SK-N-SH (cell line): ENCODE measurements at regions of chr19 and their contacts with region 1.

Region 1: GRCh38 chr19:42290523-42291438 is 11.2 kb upstream of the PRR19 start:
- DNase-seq: peak; percentile 88
- H3K4me3 ChIP-seq: no peak overlapping the region
- H3K27ac ChIP-seq: no peak overlapping the region; a peak in 1 of 4 replicates
- H3K4me1 ChIP-seq: peaks cover 6 to 13% of the 10 kb centered on the region in 2 experiments; a peak in 2 of 4 replicates
- H3K27me3 ChIP-seq: no peaks in the 10 kb centered on the region
- CTCF ChIP-seq: peak; percentile 67
- EP300 ChIP-seq: no peak
- RAD21 ChIP-seq: peak; percentile 56

Region 2: DNA sequence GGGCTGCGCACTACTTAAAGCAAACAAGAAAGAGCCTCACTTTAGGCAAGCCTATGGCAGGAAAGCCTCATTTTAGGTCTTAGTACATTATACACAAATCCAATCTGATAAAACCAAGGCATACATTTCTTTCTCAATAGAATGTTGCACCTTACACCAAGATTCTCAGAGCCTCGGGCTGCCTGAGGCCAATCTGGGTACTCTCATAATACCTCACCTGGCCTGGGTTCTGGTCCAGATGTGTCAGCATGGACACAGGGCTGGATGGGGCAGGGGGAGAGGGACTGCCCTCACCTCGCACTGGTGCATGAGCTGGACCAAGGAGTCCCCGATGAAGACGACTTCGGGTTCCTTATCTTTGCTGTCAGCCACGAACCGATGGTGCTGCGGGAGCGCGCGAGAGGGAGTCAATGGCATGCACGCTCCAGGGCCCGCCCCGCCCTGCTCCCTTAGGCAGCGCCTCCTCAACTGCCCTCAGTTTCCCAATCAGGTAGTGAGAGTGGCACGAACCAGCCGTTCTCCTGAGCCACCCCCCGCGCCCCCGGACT is 10.9 kb after region 1 on chr19 and contains the start of gene PRR19:
- CTCF ChIA-PET with region 1: interaction called, 11 read pairs
- POLR2A ChIA-PET with region 1: interaction called, 4 read pairs
- DNase-seq: no peak
- H3K4me3 ChIP-seq: peak within 1 kb of the TSS; percentile 69 to 86
- H3K27ac ChIP-seq: peak within 1 kb of the TSS; percentile 64 to 82
- H3K4me1 ChIP-seq: peaks cover 9 to 10% of the 10 kb centered on the region in 2 experiments; a peak in 3 of 4 replicates
- H3K27me3 ChIP-seq: no peaks in the 10 kb centered on the region
- CTCF ChIP-seq: no peak
- EP300 ChIP-seq: no peak
- RAD21 ChIP-seq: no peak
- polyA plus RNA-seq, gene PRR19: 1.3 TPM in 2 replicates